Activated T-helper 1 cell treated with anti-CD3 and anti-CD28 coated beads, Interleukin-12 subunit alpha, Interleukin-12 subunit beta, Interleukin-2, Interleukin-4 antibody, amounts not matched to agents 30 ng/mL and 10 ng/mL and 1 ng/mL, durations not matched to agents 14 hours and 24 hours and 36 hours (primary cell): ENCODE measurements at regions of chr7 and their contacts with region 1.

Region 1: DNA sequence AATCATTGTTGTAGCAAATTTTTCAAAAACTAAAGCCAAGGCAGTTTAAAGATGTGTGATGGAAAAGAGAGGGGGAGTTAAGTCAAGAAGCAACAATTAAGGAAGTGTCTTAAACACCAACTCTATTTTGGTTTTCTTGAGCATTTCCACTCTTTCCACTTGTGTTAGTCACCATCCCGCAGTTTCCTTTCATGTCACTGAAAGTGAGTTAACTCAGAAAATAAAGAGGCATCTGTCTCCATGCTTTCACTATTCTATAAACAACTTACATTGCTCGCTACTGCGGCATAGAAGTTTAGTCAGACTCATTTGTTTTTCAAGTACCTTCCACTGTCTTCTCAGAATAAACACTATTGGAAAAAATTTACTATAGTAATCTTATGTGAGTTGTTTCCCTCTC is 284.9 kb upstream of the SEMA3D start:
- DNase-seq: no peak
- H3K4me3 Mint-ChIP-seq: peak overlapping the region; percentile 26
- H3K27ac Mint-ChIP-seq: peak overlapping the region; percentile 72
- H3K4me1 Mint-ChIP-seq: peaks cover 24% of the 10 kb centered on the region
- H3K27me3 Mint-ChIP-seq: no peaks in the 10 kb centered on the region

Region 2: DNA sequence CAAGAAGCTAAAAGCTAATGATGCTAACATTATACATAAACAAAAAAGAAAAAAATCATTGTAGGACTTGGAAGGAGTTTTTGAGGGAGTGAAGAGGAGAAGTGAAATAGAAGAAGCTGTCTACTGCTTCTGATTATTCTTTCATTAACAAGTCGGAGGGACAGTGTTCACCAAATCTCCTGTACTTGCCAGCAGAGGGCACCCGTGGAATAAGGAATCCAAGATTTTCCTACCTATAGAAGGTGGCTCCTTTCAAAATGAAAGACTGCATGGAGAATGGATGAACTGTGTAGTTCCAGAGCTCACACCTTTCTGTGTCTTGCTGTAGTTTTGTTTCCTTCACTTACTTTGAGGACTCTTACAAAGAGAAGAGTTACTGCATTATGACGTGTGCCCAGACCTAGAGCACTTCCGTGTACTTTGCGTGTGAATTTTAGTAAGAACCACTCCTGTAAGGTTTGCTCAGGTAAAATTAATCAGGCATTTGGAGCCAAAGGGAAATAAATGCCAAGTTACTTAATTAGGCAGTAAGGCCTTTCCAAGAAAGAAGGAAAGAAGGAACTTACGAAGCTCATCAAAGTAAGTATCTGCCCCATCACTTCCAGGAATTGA is 430.0 kb before region 1 on chr7:
- intact Hi-C with region 1: loop called (anchors 5 kb)
- DNase-seq: no peak
- H3K4me3 Mint-ChIP-seq: no peak overlapping the region
- H3K27ac Mint-ChIP-seq: no peak overlapping the region
- H3K4me1 Mint-ChIP-seq: no peaks in the 10 kb centered on the region
- H3K27me3 Mint-ChIP-seq: no peaks in the 10 kb centered on the region

Region 3: GRCh38 chr7:85160223-85160622 is 311.5 kb before region 1 on chr7:
- intact Hi-C with region 1: loop called (anchors 5 kb)
- DNase-seq: no peak
- H3K4me3 Mint-ChIP-seq: no peak overlapping the region
- H3K27ac Mint-ChIP-seq: peak overlapping the region; percentile 59
- H3K4me1 Mint-ChIP-seq: peaks cover 5% of the 10 kb centered on the region
- H3K27me3 Mint-ChIP-seq: no peaks in the 10 kb centered on the region

Region 4: DNA sequence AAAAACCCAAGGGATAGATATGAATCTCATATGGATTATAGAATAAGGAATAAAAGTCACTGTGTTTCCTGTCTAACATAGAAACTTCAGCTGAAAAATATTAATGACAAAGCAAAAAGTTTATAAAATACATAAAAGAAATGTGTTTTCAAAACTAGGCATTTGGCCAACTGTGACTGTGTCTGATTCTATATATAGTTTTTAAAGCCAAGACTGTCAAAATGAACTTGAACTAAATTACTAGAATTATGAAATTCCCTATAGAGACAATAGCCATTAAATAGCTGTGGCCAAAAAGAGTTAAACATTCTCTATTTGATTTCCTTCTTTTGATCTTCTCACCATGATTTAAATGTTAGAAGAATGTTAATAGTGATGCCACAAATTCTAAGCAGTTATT is 26.3 kb after region 1 on chr7:
- intact Hi-C with region 1: no loop called
- DNase-seq: no peak
- H3K4me3 Mint-ChIP-seq: no peak overlapping the region
- H3K27ac Mint-ChIP-seq: no peak overlapping the region
- H3K4me1 Mint-ChIP-seq: no peaks in the 10 kb centered on the region
- H3K27me3 Mint-ChIP-seq: no peaks in the 10 kb centered on the region